Gastrocnemius medialis (tissue), 4 donors: ENCODE measurements at regions of chr7 and their contacts with region 1.

Region 1: DNA sequence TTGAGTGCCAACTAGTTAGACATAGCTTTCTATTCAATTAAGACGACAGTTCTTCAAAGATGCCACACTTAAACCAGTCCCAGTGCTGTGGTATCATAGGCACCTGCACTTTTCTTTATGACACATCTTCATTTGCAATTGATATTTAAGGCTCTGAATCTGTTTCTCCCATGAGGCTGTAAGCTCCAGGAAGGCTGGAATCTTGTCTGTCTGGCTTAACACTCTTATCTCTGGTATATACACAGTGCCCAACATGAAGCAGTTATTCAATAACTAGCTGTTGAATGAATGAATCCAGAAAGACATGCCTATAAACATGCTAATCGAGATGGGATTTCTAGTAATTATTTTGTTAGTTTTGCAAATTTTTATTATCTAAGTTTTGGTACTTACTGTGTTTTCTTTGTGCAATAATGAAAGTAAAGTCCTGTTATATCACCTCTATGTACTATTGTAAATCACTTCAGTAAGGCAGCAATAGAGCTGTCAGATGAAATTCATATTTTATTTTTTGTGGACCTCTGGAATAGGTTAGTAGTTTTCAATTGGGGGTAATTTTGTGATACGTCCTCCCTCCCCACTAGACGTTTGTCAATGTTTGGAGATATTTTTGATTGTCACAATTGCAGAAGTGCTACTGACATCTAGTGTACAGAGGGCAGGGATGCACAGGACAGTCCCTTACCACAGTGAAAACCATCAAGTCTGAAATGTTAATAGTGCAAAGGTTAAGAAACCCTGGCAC is 51.3 kb upstream of the STEAP4 start:
- DNase-seq: no peak
- ATAC-seq: no peak
- H3K4me3 ChIP-seq: no peak overlapping the region
- H3K27ac ChIP-seq: no peak overlapping the region
- H3K4me1 ChIP-seq: no peaks in the 10 kb centered on the region
- H3K27me3 ChIP-seq: no peaks in the 10 kb centered on the region
- CTCF ChIP-seq: peak in 2 of 5 experiments; percentile 23 to 35
- POLR2A ChIP-seq: no peak

Region 2: DNA sequence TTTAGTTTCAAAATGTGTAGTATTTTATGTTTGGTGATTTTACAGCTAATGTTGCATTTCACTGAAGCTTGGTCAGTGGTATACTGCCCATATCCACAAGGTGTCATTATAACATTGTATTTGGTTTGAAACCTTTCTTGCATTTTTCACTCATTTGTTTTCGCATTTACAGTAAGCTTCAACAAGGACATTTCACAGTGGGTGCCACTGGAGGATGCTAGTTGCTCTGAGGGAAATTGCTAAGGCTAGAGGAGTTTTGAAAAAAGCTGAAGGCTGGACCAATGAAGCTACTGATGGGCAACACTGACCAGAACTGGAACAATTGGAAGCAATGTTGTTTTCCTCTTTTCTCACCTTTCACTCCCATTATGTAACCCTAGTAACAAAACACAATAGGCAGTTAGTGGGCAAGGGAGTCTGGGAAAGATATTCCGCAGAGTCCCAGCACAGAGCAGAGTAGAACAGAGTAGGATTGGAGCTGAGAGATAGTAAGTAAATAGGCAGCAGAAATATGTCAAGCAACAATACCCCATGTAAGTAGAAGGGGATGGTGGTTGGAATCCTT is 114.5 kb before region 1 on chr7:
- in situ Hi-C with region 1: loop called in 2 of 4 experiments (anchors 10 kb)
- intact Hi-C with region 1: loop called (anchors 10 kb)
- DNase-seq: no peak
- ATAC-seq: peak; percentile 23 to 58
- H3K4me3 ChIP-seq: no peak overlapping the region
- H3K27ac ChIP-seq: no peak overlapping the region
- H3K4me1 ChIP-seq: no peaks in the 10 kb centered on the region
- H3K27me3 ChIP-seq: no peaks in the 10 kb centered on the region
- CTCF ChIP-seq: peak; percentile 34 to 57 (median 38)
- POLR2A ChIP-seq: no peak